Prostate gland (tissue), 2 donors: ENCODE measurements at regions of chr4 and their contacts with region 1.

Region 1: DNA sequence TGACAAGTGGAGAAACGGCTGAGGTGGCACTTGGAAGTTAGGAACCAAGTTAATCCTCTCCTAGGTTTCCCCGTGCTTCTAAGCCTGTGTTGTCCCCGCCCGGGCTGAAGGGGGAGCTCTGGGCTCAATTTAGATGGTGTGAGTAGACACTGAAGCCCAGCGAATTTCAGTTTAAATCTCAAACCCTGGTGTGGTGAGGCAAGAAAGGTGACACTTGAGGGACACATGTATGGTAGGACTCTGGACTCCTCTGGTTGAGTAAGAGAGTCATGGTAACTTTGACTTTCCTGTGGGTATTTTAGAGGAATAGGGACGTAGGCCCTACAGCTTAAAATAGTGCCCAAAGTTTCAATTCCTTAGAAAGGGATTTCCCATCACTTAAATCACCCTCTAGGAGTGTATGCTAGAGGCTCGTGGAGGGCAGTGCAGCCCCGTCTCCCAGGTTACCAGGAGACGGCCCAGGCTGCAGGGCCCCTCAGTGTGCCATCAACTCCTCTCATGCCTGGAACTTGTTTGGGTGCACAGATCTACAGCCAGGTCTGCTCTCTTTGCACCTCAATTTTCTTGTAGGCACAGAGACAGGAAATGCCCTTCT is 24.0 kb downstream of the HAND2 start:
- DNase-seq: no peak
- H3K4me3 ChIP-seq: no peak overlapping the region
- H3K27ac ChIP-seq: no peak overlapping the region
- H3K4me1 ChIP-seq: no peaks in the 10 kb centered on the region
- H3K27me3 ChIP-seq: peaks cover 43% of the 10 kb centered on the region
- CTCF ChIP-seq: peak in 1 of 4 experiments; percentile 28
- POLR2A ChIP-seq: no peak

Region 2: GRCh38 chr4:173218411-173219125 is 287.5 kb before region 1 on chr4:
- intact Hi-C with region 1: no loop called
- DNase-seq: no peak
- H3K4me3 ChIP-seq: no peak overlapping the region
- H3K27ac ChIP-seq: no peak overlapping the region
- H3K4me1 ChIP-seq: peaks cover 3% of the 10 kb centered on the region
- H3K27me3 ChIP-seq: no peaks in the 10 kb centered on the region
- CTCF ChIP-seq: no peak
- POLR2A ChIP-seq: no peak

Region 3: DNA sequence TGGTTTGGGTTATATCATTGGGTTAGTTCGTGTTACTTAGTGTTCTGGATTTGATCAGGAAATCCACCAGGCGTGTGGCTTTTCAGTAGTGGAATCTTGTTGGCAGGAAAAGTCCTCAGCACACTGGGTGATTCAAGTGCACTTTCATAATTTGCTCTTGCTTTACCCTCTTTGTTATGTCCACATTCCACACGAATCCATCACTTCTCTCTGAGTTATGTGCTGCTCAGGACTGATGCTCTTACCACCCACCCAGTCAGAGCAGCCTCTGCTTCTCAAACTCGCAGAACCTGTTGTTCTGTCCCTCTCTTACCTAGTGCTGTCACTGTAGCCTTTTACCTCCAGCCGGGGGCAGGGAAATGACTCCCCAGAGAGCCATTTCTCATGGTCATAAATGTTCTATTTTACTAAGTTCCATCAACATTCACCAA is 69.9 kb before region 1 on chr4:
- intact Hi-C with region 1: no loop called
- DNase-seq: no peak
- H3K4me3 ChIP-seq: no peak overlapping the region
- H3K27ac ChIP-seq: no peak overlapping the region
- H3K4me1 ChIP-seq: no peaks in the 10 kb centered on the region
- H3K27me3 ChIP-seq: no peaks in the 10 kb centered on the region
- CTCF ChIP-seq: no peak
- POLR2A ChIP-seq: no peak

Region 4: DNA sequence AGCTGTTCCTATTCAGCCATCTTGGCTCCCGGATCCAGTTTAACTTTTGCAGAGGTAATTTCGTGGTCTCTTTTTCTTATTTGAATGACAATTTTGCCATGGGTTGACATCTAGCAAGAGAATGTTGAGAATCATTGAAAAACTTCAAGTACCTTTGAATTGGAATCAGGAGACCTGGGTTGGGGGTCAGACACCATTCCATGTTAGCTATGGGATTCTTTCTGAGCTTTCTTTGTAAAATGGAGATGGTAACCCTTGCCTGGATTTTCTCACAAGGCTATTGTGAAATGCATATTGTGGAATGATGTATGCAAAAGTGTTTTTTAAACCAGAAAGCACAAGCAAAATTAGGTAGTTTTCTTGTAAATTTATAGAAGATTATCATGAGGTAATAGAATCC is 103.1 kb after region 1 on chr4:
- intact Hi-C with region 1: no loop called
- DNase-seq: no peak
- H3K4me3 ChIP-seq: no peak overlapping the region
- H3K27ac ChIP-seq: no peak overlapping the region
- H3K4me1 ChIP-seq: no peaks in the 10 kb centered on the region
- H3K27me3 ChIP-seq: no peaks in the 10 kb centered on the region
- CTCF ChIP-seq: no peak
- POLR2A ChIP-seq: no peak

Region 5: DNA sequence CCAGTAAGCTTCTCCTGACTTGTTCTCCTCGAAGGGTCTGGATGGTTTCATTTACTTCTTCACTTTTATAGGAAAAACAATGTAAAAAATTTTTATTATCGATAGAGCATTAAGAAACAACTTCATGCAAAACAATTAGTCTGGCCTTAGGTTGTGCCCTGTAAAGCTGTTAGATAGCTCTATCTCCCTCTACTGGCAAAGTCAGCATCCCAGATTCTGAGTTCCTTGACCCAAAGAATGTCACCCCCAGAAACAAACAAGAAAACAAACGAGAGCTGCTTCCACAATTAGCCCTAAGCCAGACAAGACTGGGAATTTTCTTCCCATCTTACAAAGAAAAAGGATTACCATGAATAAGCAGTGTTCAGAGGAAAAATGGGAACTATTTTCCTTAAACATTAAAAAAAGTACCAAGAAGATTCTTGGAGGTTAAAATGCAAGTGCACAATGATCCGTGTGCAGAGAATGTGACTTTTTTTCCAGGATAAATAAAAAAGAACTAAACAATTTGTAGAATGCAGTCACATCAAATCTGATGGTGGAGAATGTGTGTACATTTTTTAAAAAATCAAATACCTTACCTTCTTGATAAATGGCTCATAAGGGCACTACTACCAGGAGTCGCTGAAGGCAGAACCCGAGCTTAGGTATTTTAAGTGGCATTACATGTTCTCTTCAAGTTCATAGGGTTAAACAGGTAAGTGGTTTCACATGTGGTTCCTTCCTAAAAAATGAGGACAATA is 484.3 kb after region 1 on chr4:
- intact Hi-C with region 1: loop called (anchors 10 kb)
- DNase-seq: no peak
- H3K4me3 ChIP-seq: no peak overlapping the region
- H3K27ac ChIP-seq: no peak overlapping the region
- H3K4me1 ChIP-seq: no peaks in the 10 kb centered on the region
- H3K27me3 ChIP-seq: no peaks in the 10 kb centered on the region
- CTCF ChIP-seq: no peak
- POLR2A ChIP-seq: no peak

Region 6: DNA sequence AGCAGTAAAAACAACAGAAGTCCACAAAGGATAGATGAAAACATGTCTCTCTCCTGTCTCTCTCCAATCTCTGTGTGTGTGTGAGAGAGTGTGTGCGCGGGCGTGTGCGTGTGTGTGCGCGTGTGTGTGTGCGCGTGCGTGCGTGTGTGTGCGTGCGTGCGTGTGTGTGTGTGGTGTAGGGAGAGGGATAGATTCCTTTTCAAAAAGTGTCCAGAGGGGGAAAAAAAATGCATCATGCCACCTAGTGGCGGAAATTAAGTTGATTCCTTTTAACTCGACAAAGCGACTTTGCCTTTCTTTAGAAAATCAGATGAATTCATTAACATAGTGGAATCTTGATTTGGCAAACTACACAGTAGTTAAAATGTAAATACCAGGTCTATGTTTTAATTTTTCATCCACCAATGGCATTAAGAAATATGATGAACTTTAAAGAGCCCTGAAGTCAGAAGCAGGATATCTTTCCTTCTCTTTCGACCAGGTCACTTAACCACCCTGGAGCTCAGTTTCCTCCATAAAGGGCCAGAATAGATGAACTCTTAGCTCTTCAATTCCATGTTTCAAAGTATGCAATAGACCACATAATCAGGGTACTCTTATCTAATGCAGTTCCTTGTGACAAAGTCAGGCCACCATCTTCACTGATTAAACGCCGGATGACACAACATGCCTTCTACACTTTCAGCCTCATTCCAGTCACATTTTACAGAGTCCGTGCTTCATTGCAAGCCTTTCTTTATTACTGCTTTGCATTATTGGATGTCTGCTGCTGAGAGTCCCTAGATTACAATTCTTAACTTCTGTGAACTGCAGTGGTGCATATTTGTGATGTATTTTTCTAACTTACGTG is 614.6 kb after region 1 on chr4:
- intact Hi-C with region 1: loop called (anchors 5 kb)
- DNase-seq: no peak
- H3K4me3 ChIP-seq: no peak overlapping the region
- H3K27ac ChIP-seq: no peak overlapping the region
- H3K4me1 ChIP-seq: no peaks in the 10 kb centered on the region
- H3K27me3 ChIP-seq: no peaks in the 10 kb centered on the region
- CTCF ChIP-seq: peak in 3 of 4 experiments; percentile 44 to 50 (median 44)
- POLR2A ChIP-seq: no peak